Natural killer cell (primary cell): ENCODE measurements at regions of chr19 and their contacts with region 1.

Region 1: DNA sequence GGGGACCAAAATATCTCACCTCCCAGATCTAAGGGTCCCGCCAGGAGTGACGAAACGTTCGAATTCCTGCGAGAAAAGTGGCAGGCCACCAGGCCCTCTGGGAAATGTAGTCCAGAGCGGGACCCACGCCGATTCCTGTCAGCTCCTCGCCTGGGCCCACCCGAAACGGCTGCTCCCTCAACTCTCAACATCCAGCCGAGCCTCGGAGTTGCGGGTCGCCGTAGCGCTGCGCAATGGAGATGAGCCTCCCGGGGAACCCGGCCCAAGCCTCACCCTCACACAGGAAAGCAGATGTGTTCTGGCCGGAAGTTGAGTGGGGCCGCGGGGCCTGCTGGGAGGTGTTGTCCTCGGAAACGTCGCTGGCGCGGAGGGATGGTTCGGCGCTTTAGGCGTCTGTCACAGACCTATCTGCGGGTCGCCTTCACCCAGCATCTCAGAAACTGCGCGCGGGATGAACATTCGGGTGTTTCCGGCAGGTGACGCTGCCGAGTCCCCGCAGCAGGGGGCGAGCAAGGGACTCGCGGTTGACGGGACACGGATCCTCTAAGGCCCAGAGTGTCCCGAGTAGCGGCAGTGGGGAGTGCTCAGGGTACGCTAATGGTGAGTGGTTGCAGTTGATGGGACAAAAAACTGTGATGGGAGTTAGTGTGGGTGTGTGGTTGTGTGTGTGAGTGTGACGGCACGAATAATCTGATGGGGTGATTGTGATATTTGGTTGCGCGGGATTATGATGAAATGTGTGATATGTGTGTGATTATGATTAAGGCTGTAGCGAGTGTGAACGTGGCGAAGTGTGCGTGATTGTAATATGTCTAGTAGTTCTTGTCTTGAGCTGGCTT is at the starts of genes ZNF568 and ZNF829:
- DNase-seq: peak; percentile 90 to 96
- ATAC-seq: peak; percentile 92 to 98 (median 94)
- H3K4me3 ChIP-seq: peak within 1 kb of the TSS; percentile 66
- H3K4me3 Mint-ChIP-seq: peak within 1 kb of the TSS; percentile 87
- H3K27ac ChIP-seq: peak within 1 kb of the TSS; percentile 95
- H3K27ac Mint-ChIP-seq: peak within 1 kb of the TSS; percentile 89 to 93
- H3K4me1 ChIP-seq: peaks cover 13% of the 10 kb centered on the region
- H3K4me1 Mint-ChIP-seq: peaks cover 35% of the 10 kb centered on the region in 2 donors
- H3K27me3 ChIP-seq: no peaks in the 10 kb centered on the region
- H3K27me3 Mint-ChIP-seq: no peaks in the 10 kb centered on the region
- CTCF ChIP-seq: peak; percentile 75
- total RNA-seq, gene ZNF568: 9.4 to 15.5 (median 15.3) TPM
- total RNA-seq, gene ZNF829: 5.5 to 7.6 (median 5.5) TPM

Region 2: GRCh38 chr19:36837906-36838783 is 78.1 kb before region 1 on chr19 and contains the start of gene ZNF790:
- intact Hi-C with region 1: loop called (anchors 1 kb)
- DNase-seq: peak; percentile 83 to 91
- ATAC-seq: peak; percentile 91 to 97 (median 94)
- H3K4me3 ChIP-seq: peak within 1 kb of the TSS; percentile 80
- H3K4me3 Mint-ChIP-seq: no peak within 1 kb of the TSS
- H3K27ac ChIP-seq: peak within 1 kb of the TSS; percentile 94
- H3K27ac Mint-ChIP-seq: no peak within 1 kb of the TSS
- H3K4me1 ChIP-seq: peaks cover 14% of the 10 kb centered on the region
- H3K4me1 Mint-ChIP-seq: peaks cover 0 to 6% of the 10 kb centered on the region in 2 donors
- H3K27me3 ChIP-seq: no peaks in the 10 kb centered on the region
- H3K27me3 Mint-ChIP-seq: no peaks in the 10 kb centered on the region
- CTCF ChIP-seq: no peak
- total RNA-seq, gene ZNF790: 2.6 to 6.8 (median 5.0) TPM

Region 3: DNA sequence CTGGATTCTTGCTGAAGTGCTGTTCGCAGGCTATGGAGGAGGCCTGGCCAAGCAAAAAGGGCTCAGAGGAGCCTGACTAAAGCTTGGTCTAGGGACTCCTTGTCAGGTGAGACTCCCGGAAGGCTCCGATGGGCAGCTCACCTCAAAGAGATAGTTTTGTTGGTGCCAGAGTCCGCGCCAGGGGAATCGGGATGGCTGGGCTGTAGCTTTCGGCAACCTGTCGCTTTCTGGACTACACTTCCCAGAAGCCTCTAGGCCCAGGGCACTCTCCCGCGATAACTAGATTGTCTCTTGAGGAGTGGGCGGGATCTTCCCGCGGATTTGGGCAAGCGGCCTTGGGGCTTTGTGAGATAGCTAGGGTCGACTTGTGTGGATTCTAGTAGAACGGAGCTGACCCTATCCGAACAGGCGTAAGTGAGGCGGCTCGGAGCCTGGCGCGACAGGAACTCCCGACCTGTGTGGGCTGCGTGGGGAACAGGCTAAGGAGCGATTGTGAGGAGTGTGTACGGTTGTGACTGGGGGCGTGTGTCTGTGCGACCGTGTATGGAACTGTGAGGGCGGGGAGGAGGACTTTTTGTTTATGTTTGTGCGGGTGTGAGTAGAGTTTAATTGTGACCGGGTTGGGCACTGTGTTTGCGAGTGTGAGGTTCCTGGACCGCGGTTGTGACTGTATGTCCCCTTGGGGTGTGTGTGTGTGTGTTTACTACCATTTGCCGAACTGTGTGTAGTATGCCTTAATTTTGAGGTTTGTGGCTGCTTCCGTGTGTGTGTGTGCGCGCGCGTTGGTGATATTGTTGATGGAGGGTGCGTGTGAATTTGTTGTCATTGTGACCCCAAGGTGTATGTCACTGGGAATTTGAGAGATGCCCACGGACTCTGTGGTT is 65.4 kb before region 1 on chr19 and contains the start of gene ZNF345:
- intact Hi-C with region 1: loop called (anchors 1 kb)
- DNase-seq: peak; percentile 73 to 94
- ATAC-seq: peak; percentile 79 to 94 (median 85)
- H3K4me3 ChIP-seq: peak within 1 kb of the TSS; percentile 62
- H3K4me3 Mint-ChIP-seq: no peak within 1 kb of the TSS
- H3K27ac ChIP-seq: peak within 1 kb of the TSS; percentile 85
- H3K27ac Mint-ChIP-seq: no peak within 1 kb of the TSS
- H3K4me1 ChIP-seq: peaks cover 23% of the 10 kb centered on the region
- H3K4me1 Mint-ChIP-seq: peaks cover 0 to 10% of the 10 kb centered on the region in 2 donors
- H3K27me3 ChIP-seq: no peaks in the 10 kb centered on the region
- H3K27me3 Mint-ChIP-seq: no peaks in the 10 kb centered on the region
- CTCF ChIP-seq: no peak
- total RNA-seq, gene ZNF345: 7.1 to 19.5 (median 10.0) TPM

Region 4: GRCh38 chr19:36973021-36973843 is 57.0 kb after region 1 on chr19:
- intact Hi-C with region 1: loop called (anchors 2 kb)
- DNase-seq: peak; percentile 63 to 91
- ATAC-seq: peak; percentile 88 to 89 (median 89)
- H3K4me3 ChIP-seq: peak overlapping the region; percentile 76
- H3K4me3 Mint-ChIP-seq: peak overlapping the region; percentile 100
- H3K27ac ChIP-seq: peak overlapping the region; percentile 59
- H3K27ac Mint-ChIP-seq: peak overlapping the region; percentile 95 to 99
- H3K4me1 ChIP-seq: peaks cover 17% of the 10 kb centered on the region
- H3K4me1 Mint-ChIP-seq: peaks cover 16 to 20% of the 10 kb centered on the region in 2 donors
- H3K27me3 ChIP-seq: no peaks in the 10 kb centered on the region
- H3K27me3 Mint-ChIP-seq: no peaks in the 10 kb centered on the region
- CTCF ChIP-seq: peak; percentile 45

Region 5: DNA sequence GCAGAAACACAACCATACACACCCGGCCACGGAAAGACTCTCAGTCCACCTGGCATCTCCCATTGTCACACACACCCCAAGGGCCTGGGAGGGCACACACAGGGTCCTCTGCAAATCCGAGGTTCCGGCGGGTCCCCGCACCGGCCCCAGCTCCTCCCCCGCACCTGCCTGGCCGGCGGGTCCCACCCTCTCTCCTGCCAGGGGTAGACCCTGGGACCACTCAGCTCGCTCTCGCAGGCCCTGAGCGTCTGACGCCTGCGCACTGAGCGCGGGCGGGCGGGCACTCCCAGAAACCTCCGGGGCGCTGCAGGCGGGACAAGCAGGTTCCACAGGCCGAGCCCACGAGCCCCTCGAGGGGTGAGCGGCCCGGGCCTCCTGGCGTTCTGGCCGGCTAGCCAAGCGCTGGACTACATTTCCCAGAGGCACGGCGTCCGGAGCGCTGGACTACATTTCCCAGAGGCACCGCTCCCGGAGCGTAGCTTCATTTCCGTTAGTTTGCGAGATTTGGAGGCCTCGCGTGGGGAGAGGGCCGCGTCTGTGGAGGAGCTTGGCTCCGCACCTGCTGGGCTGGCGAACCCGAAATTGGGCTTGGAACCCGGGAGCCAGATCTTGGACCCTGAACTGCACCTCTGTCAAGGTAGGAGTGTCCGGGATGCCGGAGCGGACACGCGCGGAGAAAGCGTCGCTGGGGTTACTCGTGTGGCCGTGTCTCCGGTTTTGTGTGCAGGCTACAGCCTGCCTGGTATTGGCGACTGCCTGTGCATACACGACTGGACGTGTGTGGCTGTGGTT is 161.9 kb after region 1 on chr19 and contains the start of gene ZNF420:
- intact Hi-C with region 1: loop called (anchors 2 kb)
- DNase-seq: peak; percentile 82 to 94
- ATAC-seq: peak; percentile 90 to 96 (median 93)
- H3K4me3 ChIP-seq: peak within 1 kb of the TSS; percentile 83
- H3K4me3 Mint-ChIP-seq: peak within 1 kb of the TSS; percentile 100
- H3K27ac ChIP-seq: peak within 1 kb of the TSS; percentile 77
- H3K27ac Mint-ChIP-seq: peak within 1 kb of the TSS; percentile 96 to 97
- H3K4me1 ChIP-seq: peaks cover 8% of the 10 kb centered on the region
- H3K4me1 Mint-ChIP-seq: peaks cover 32 to 37% of the 10 kb centered on the region in 2 donors
- H3K27me3 ChIP-seq: no peaks in the 10 kb centered on the region
- H3K27me3 Mint-ChIP-seq: no peaks in the 10 kb centered on the region
- CTCF ChIP-seq: no peak
- total RNA-seq, gene ZNF420: 6.4 to 15.6 (median 10.2) TPM